Astrocyte of the cerebellum (primary cell): ENCODE measurements at regions of chr1 and their contacts with region 1.

Region 1: DNA sequence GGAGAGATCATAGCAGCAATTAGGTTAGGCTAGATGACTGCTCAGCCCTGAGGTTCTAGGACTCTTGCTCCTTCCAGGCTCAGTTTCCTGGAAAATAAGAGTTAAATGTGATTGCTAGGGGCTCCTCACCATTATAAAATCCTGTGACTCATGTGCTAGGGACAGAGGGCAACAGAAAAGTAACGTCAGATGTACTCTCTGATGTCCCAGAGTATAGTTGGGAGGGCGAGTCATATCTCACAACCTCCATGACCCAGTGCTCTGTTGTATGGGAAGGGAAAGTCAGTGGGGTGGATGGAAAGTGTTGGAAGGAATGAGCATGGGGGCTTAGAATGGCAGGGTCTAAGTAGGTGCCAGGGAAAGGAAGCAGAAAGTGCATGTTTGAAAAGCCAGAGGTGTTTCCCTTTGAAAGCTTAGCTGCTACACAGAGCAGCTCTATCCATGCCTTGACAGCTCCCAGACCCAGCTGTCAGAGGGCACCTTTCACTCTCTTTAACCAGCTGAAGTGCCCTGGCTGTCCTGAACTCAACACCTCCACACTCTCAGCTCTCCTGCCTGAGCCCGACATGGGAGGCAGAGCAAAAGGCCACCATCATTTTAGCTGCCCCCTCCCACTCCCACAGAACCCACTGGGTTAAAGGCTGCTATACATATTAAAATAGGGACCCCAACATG is 11.6 kb downstream of the GJA5 start:
- DNase-seq: no peak
- H3K4me3 ChIP-seq: no peak overlapping the region
- CTCF ChIP-seq: no peak

Region 2: DNA sequence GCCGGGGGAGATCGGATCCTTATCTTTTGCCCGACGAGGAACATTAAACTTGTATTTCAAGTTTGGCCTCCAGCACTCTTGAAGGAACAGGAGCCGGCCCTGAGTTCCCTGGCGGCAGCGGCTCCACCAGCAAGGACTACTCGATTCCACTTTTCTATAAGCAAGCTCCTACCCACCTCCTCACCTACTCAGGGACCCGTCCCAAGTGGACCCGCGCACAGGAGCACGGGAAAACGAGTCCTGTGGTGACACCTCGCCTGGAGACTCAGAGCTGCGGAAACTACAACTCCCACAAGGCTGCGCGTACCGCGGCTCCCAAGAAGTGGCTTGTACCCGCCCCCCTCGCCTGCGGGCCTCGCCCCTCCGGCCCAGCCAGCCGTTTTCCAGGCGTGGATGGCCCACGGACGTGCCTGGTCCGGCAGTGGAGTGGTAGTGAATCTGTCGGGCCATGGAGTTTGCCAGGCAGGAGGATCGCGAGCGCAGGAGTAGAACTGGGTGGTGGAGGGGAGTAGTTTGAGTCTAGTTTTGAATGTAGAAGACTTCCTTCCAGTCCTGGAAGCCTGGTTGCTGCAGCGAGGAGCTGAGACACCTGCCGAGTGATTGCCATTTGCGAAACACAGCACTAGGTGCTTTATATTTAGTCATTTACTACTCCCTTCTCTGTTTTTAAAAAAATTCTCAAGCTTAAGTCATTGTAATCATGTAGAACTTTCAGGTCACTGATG is 78.3 kb before region 1 on chr1 and contains the start of gene ACP6:
- in situ Hi-C with region 1: no loop called
- DNase-seq: peak; percentile 90
- H3K4me3 ChIP-seq: peak within 1 kb of the TSS; percentile 65
- CTCF ChIP-seq: no peak

Region 3: GRCh38 chr1:147717063-147717565 is 31.7 kb before region 1 on chr1:
- in situ Hi-C with region 1: no loop called
- DNase-seq: no peak
- H3K4me3 ChIP-seq: no peak overlapping the region
- CTCF ChIP-seq: no peak

Region 4: GRCh38 chr1:147800804-147801203 is 52.0 kb after region 1 on chr1:
- in situ Hi-C with region 1: loop called (anchors 5 kb)
- DNase-seq: no peak
- H3K4me3 ChIP-seq: no peak overlapping the region
- CTCF ChIP-seq: no peak